ENCODE measurements at regions of chr1 and their contacts with region 1.

Region 1: DNA sequence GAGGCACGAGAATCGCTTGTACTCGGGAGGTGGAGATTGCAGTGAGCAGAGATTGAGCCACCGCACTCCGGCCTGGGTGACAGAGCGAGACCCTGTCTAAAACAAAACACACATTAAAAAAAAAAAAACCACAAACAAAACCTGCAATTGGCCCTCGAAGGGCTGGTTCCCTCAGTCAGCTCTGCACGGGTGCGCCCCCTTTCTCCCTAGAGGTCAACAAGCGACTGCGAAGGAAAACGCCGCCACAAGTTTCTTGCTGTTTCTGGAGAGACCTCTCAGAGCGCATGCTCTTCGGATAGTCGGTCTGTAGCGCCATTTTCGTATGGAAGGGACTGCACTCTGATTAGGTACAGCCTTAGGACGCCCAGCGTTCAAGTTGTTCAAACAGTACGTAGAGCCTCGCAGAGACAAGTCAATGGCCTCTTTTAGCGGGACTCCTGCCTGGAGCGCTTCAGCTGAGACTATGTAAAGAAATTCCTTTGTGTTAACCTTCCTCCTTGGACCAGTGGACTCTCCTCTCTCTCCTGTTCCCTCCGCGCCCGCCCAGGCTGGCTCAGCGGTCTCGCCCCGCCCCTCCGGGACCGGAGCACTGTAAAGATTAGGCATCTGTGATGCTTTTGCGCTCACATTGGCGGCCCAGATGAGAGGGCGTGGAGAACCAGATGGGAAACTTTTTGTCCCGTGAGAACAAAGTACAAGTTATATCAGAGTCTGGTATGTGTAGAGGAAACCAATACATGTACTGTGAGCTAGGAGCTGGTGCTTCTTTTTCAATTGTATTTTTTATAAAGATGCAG is 1.0 kb upstream of the CDC14A start:
- DNase-seq: peak; percentile 95
- H3K4me3 ChIP-seq: peak overlapping the region; percentile 70 to 97 (median 74)
- H3K27ac ChIP-seq: peak overlapping the region; percentile 91 to 93 (median 92)
- H3K4me1 ChIP-seq: peaks cover 0 to 38% (median 23%) of the 10 kb centered on the region in 4 donors
- H3K27me3 ChIP-seq: no peaks in the 10 kb centered on the region
- CTCF ChIP-seq: peak in 3 of 5 experiments; percentile 17 to 26 (median 22)
- EP300 ChIP-seq: no peak
- POLR2A ChIP-seq: peak; percentile 72

Region 2: DNA sequence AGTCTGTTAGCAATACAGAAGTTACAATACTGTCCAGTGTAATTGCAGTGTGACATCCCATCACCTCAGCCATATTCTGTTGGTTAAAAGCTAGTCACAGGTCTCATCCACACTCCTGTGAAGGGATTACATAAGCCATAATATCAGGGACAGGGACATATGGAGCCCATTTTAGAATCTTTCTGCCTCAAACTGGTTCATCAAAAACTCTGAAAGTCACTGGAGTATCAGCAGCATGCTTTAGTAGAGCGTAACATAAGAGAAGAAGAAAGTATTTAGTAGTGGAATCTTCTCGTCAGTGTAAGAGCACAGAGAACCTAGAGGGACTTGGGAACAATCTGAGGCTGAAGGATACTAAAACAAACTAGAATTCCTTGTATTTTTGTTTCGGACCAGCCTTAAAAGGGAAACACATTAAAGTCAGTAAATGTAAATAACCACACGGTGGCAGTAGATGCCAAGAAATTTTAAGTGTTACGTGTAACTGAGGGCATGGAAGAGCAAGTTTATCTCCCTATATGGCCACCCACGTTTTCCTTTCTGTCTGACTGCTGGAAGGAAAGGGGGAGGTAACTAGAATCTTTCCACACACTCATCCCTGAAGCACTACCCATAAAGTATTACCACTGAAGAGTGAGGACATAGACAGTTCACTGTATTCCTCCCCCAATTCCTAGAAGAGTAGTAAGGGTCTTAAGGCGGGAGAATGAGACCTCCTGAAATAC is 542.7 kb before region 1 on chr1:
- in situ Hi-C with region 1: no loop called
- intact Hi-C with region 1: loop called (anchors 5 kb)
- DNase-seq: peak; percentile 11
- H3K4me3 ChIP-seq: no peak overlapping the region
- H3K27ac ChIP-seq: peak overlapping the region; percentile 50 to 77 (median 66)
- H3K4me1 ChIP-seq: peaks cover 0 to 9% (median 0%) of the 10 kb centered on the region in 4 donors
- H3K27me3 ChIP-seq: no peaks in the 10 kb centered on the region
- CTCF ChIP-seq: peak; percentile 63 to 75 (median 69)
- EP300 ChIP-seq: no peak
- POLR2A ChIP-seq: no peak

Region 3: GRCh38 chr1:99943223-99943794 is 408.0 kb before region 1 on chr1:
- in situ Hi-C with region 1: no loop called
- intact Hi-C with region 1: no loop called
- DNase-seq: no peak
- H3K4me3 ChIP-seq: no peak overlapping the region
- H3K27ac ChIP-seq: no peak overlapping the region
- H3K4me1 ChIP-seq: no peaks in the 10 kb centered on the region
- H3K27me3 ChIP-seq: no peaks in the 10 kb centered on the region
- CTCF ChIP-seq: no peak
- EP300 ChIP-seq: no peak
- POLR2A ChIP-seq: no peak

Region 4: GRCh38 chr1:100037927-100038659 is 313.2 kb before region 1 on chr1:
- in situ Hi-C with region 1: no loop called
- intact Hi-C with region 1: loop called (anchors 10 kb)
- DNase-seq: peak; percentile 92
- H3K4me3 ChIP-seq: peak overlapping the region; percentile 71 to 93 (median 84)
- H3K27ac ChIP-seq: peak overlapping the region; percentile 97 to 100 (median 98)
- H3K4me1 ChIP-seq: peaks cover 10 to 54% (median 22%) of the 10 kb centered on the region in 4 donors
- H3K27me3 ChIP-seq: no peaks in the 10 kb centered on the region
- CTCF ChIP-seq: no peak
- EP300 ChIP-seq: no peak
- POLR2A ChIP-seq: peak; percentile 95

Region 5: GRCh38 chr1:100292711-100293110 is 58.6 kb before region 1 on chr1:
- in situ Hi-C with region 1: no loop called
- intact Hi-C with region 1: loop called (anchors 10 kb)
- DNase-seq: no peak
- H3K4me3 ChIP-seq: no peak overlapping the region
- H3K27ac ChIP-seq: no peak overlapping the region
- H3K4me1 ChIP-seq: no peaks in the 10 kb centered on the region
- H3K27me3 ChIP-seq: no peaks in the 10 kb centered on the region
- CTCF ChIP-seq: no peak
- EP300 ChIP-seq: no peak
- POLR2A ChIP-seq: no peak

Region 6: DNA sequence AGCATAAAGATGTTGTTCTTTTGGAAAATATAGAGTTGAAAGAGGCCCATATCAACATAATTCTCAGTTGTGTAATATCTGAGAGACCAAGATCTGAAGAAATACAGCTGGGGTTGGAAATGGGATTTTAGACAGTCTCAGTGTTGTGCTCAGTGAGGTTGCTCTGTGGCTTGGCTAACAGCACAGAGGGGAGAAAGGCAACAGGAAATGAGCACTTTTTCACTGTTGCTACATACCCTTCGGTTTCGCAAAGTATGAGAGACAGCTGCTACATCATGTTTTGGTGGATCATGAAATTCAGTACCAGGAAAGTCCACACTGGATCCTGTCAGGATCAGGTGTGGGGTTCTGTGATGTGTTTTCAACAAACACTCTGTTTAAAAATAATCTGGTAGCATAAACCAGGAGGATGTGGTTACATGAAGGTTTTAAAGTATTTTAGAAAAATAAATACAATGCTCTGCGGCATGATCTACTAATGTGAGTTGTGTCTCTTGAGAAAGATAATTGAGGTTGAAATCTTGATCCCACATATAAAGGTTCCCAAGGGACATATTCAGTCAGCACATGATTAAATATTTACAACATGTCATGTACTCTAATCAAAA is 179.7 kb after region 1 on chr1:
- in situ Hi-C with region 1: no loop called
- intact Hi-C with region 1: no loop called
- DNase-seq: peak; percentile 23
- H3K4me3 ChIP-seq: no peak overlapping the region
- H3K27ac ChIP-seq: peak overlapping the region; percentile 21 to 70 (median 50)
- H3K4me1 ChIP-seq: peaks cover 0 to 7% (median 0%) of the 10 kb centered on the region in 4 donors
- H3K27me3 ChIP-seq: peaks cover 10% of the 10 kb centered on the region
- CTCF ChIP-seq: no peak
- EP300 ChIP-seq: no peak
- POLR2A ChIP-seq: no peak

Region 7: GRCh38 chr1:100734676-100735075 is 383.4 kb after region 1 on chr1:
- in situ Hi-C with region 1: no loop called
- intact Hi-C with region 1: no loop called
- DNase-seq: no peak
- H3K4me3 ChIP-seq: no peak overlapping the region
- H3K27ac ChIP-seq: peak overlapping the region in 3 of 4 donors; percentile 10 to 53 (median 50)
- H3K4me1 ChIP-seq: peaks cover 0 to 11% (median 0%) of the 10 kb centered on the region in 4 donors
- H3K27me3 ChIP-seq: no peaks in the 10 kb centered on the region
- CTCF ChIP-seq: no peak
- EP300 ChIP-seq: no peak
- POLR2A ChIP-seq: no peak